Mammary epithelial cell (primary cell): ENCODE measurements at regions of chr5 and their contacts with region 1.

Region 1: DNA sequence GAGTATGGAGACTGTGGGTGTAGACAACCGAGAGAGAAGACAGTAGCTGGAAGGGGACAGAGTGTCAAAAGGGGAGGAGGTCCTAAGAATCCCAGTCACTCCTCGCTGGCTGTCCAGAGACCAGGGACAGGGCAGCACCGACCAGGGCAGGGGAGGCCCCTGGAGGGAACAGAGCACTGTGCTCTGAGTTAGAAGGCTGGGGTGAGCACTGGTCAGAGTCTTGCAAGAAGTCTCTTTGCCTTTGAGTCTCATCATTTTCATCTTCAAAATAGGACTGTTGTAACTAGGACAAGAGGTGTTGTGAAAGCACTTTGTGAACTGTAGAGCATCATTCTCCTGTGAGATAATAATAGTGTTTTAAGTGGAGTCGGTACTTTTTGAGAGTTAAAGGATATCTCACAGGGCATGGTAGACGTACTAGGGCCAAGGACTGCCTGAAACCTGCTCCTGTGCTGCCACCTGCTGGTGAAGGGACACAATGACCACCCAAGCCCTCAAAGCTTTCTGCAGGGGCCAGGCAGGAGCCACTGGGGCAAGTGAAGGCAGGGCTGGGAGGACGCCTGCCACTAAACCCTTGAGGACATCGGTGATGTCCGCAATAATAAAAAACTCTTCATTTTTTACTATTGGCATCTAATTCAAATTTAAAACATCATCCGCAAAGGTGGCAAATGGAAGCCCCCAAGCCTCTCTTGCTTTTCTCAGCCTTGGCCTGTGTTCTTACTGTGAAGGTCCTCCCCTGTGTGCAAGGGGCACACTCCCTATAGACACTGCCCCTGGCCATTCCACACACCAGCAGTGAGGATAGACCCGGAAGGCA is 28.2 kb downstream of the SLC6A7 start:
- DNase-seq: peak; percentile 59
- H3K4me3 ChIP-seq: no peak overlapping the region
- H3K27ac ChIP-seq: no peak overlapping the region
- H3K4me1 ChIP-seq: no peaks in the 10 kb centered on the region
- H3K27me3 ChIP-seq: no peaks in the 10 kb centered on the region
- CTCF ChIP-seq: peak; percentile 82 to 83

Region 2: GRCh38 chr5:149828161-149828884 is 389.8 kb before region 1 on chr5:
- CTCF ChIA-PET with region 1: no interaction called
- dilution Hi-C with region 1: no loop called
- in situ Hi-C with region 1: loop called (anchors 25 kb)
- intact Hi-C with region 1: no loop called
- DNase-seq: peak; percentile 89
- H3K4me3 ChIP-seq: no peak overlapping the region
- H3K27ac ChIP-seq: no peak overlapping the region
- H3K4me1 ChIP-seq: no peaks in the 10 kb centered on the region
- H3K27me3 ChIP-seq: no peaks in the 10 kb centered on the region
- CTCF ChIP-seq: peak; percentile 90 to 95

Region 3: GRCh38 chr5:149960272-149961185 is 257.6 kb before region 1 on chr5 and contains the start of gene SLC26A2:
- CTCF ChIA-PET with region 1: no interaction called
- dilution Hi-C with region 1: no loop called
- in situ Hi-C with region 1: no loop called
- intact Hi-C with region 1: loop called (anchors 10 kb)
- DNase-seq: peak; percentile 98
- H3K4me3 ChIP-seq: peak within 1 kb of the TSS; percentile 58 to 78 (median 74)
- H3K27ac ChIP-seq: peak within 1 kb of the TSS; percentile 75
- H3K4me1 ChIP-seq: peaks cover 23% of the 10 kb centered on the region
- H3K27me3 ChIP-seq: no peaks in the 10 kb centered on the region
- CTCF ChIP-seq: no peak
- total RNA-seq, gene SLC26A2: 18.1 to 63.2 TPM

Region 4: GRCh38 chr5:150129813-150130492 is 88.1 kb before region 1 on chr5:
- CTCF ChIA-PET with region 1: no interaction called
- dilution Hi-C with region 1: no loop called
- in situ Hi-C with region 1: no loop called
- intact Hi-C with region 1: loop called (anchors 1 kb)
- DNase-seq: peak; percentile 59
- H3K4me3 ChIP-seq: peak overlapping the region in 1 of 3 experiments; percentile 35
- H3K27ac ChIP-seq: no peak overlapping the region
- H3K4me1 ChIP-seq: peaks cover 17% of the 10 kb centered on the region
- H3K27me3 ChIP-seq: no peaks in the 10 kb centered on the region
- CTCF ChIP-seq: peak; percentile 95 to 98

Region 5: GRCh38 chr5:150272526-150272925 is 54.4 kb after region 1 on chr5:
- CTCF ChIA-PET with region 1: no interaction called
- dilution Hi-C with region 1: loop called (anchors 10 kb)
- in situ Hi-C with region 1: no loop called
- intact Hi-C with region 1: no loop called
- DNase-seq: peak; percentile 46
- H3K4me3 ChIP-seq: no peak overlapping the region
- H3K27ac ChIP-seq: no peak overlapping the region
- H3K4me1 ChIP-seq: peaks cover 5% of the 10 kb centered on the region
- H3K27me3 ChIP-seq: no peaks in the 10 kb centered on the region
- CTCF ChIP-seq: peak; percentile 53 to 78